ENCODE measurements at regions of chr13 and their contacts with region 1.

Region 1: GRCh38 chr13:97018029-97018831 is 24.0 kb upstream of the OXGR1 start:
- DNase-seq: peak; percentile 32
- H3K4me3 ChIP-seq: no peak overlapping the region
- H3K27ac ChIP-seq: no peak overlapping the region
- H3K27me3 ChIP-seq: peaks cover 7% of the 10 kb centered on the region
- CTCF ChIP-seq: peak; percentile 93

Region 2: GRCh38 chr13:96662036-96662435 is 356.2 kb before region 1 on chr13:
- CTCF ChIA-PET with region 1: no interaction called
- POLR2A ChIA-PET with region 1: no interaction called
- DNase-seq: no peak
- H3K4me3 ChIP-seq: no peak overlapping the region
- H3K27ac ChIP-seq: no peak overlapping the region
- H3K27me3 ChIP-seq: no peaks in the 10 kb centered on the region
- CTCF ChIP-seq: no peak

Region 3: DNA sequence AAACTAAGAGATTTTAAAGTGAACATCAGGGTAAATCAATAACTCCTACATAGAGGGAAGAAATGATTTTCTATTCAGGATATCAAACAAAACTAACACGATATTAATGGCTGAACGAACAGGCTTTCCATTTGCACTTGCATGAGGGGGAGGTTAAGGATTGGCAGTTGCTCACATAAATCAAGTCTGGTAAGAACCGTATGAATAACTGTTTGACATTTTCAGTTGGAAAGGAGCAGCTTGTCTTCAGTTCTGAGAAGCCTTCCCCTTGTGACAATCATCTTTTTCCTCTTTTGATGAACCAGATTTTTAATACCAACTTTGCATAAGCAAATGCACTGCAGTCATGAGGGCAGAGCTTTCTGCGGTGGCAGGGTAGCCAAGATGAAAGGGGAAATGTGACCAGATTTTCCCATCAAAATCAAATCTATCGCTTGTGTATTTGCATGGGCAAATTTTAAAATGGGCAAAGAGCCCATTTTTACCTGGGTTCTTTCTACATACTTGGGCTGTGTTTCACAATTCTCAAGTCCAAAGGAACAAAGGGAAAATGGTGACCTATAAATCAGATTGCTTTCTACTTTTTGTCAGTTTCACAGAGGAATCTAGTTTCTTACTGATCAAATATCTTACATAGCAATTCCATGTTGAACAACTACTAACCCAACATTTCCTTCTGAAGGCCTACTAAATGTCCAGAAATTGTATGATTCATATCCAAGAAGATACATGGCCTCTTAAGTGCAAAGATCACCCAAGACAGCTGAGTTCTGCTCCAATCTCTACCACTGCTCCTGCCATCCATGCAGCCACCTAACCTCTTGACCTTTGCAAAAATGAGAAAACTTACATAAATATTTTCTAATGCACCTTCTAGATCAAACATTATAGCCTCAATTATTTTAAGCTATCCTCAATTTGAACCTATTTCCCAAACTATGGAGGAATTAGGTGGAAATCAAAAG is 273.6 kb before region 1 on chr13:
- CTCF ChIA-PET with region 1: no interaction called
- POLR2A ChIA-PET with region 1: no interaction called
- DNase-seq: no peak
- H3K4me3 ChIP-seq: no peak overlapping the region
- H3K27ac ChIP-seq: no peak overlapping the region
- H3K27me3 ChIP-seq: no peaks in the 10 kb centered on the region
- CTCF ChIP-seq: no peak

Region 4: GRCh38 chr13:97030705-97031452 is 12.6 kb after region 1 on chr13:
- CTCF ChIA-PET with region 1: interaction called, 12 read pairs
- POLR2A ChIA-PET with region 1: no interaction called
- DNase-seq: peak; percentile 4
- H3K4me3 ChIP-seq: no peak overlapping the region
- H3K27ac ChIP-seq: no peak overlapping the region
- H3K27me3 ChIP-seq: no peaks in the 10 kb centered on the region
- CTCF ChIP-seq: 0 out of 2 replicates have a peak, but pooled peaks have one; percentile 11

Region 5: DNA sequence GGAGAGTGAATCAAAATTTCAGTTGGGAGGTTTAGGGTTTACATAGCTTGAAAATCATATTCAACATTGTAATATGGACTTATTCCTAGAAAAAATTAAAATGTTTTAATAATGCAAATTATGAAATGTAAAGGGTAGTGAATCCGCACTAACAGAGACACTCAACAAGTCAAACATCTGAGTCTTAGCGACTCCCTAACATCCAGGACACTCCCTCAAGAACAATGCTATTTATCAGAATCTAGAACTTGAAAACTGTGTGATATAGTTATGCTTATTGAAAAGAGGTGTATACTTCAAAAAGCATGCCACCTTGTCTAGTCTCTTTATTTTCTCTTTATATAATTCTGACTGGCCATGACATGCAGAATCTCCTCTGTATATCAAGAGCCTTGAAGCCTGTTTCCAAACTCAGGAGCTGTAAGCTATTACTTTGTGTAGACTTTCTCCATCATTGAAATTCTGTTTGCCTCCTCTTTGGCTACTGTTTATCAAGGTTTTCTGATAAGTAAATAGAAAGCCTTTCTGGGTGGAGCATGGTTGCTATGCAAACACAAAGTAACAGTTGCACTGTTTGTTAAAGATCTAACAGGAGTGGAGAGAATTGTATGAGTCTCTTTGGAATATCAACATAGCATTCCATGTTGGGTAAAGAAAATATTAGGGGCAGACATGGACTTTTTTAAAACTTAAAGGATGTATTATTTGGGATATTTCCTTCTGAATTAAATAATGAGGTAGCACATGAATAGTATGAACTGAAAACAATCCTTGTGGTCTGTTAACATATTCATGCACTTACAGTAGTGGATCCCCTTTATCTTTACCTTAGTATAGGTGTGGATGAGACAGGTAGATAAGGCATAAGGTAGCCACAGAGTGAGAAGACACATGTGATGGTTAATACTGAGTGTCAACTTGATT is 147.5 kb after region 1 on chr13:
- CTCF ChIA-PET with region 1: no interaction called
- POLR2A ChIA-PET with region 1: no interaction called
- DNase-seq: no peak
- H3K4me3 ChIP-seq: no peak overlapping the region
- H3K27ac ChIP-seq: no peak overlapping the region
- H3K27me3 ChIP-seq: no peaks in the 10 kb centered on the region
- CTCF ChIP-seq: no peak

Region 6: DNA sequence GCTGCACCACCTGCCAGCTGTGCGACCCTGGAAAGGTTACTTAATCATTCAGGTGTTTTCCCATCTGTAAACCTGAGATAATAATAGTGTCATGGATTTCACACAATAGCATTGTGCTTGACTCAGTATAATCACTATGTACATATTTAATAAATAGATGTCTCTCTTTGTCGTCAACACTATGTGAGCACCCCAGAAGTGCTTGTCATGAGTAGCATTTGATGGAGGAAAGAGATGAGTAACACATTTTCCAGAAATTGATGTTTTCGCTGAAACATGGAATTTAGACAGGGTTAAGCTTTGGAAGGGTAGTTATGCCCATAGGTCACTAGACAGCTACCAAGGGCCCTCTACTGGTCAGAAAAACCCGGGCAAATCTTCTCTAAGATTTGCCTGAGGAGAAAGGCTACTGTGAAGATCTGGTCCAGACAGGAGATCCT is 194.4 kb after region 1 on chr13:
- CTCF ChIA-PET with region 1: interaction called, 16 read pairs
- POLR2A ChIA-PET with region 1: no interaction called
- DNase-seq: no peak
- H3K4me3 ChIP-seq: no peak overlapping the region
- H3K27ac ChIP-seq: no peak overlapping the region
- H3K27me3 ChIP-seq: no peaks in the 10 kb centered on the region
- CTCF ChIP-seq: peak; percentile 77

Region 7: DNA sequence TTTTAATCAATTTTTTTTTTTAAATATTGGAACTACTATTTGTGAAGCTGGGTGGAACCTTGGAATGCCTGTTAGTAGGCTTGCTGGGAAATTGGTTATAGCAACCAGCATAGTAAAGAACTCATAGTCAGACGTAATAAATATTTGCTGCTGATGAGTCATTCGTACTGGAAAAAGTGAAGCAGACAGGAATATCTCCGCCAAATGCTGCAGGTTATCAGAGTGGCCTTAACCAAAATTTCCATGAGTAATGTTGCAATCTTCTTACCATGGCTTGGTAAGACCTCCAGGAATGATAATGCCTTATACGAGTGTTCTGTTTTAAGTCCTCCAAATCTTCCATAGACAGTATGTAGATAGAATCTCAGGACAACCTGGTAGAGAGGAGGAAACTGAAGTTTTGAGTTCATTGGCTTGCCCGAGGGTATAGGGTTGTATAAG is 238.1 kb after region 1 on chr13:
- CTCF ChIA-PET with region 1: no interaction called
- POLR2A ChIA-PET with region 1: no interaction called
- DNase-seq: peak; percentile 74
- H3K4me3 ChIP-seq: no peak overlapping the region
- H3K27ac ChIP-seq: peak overlapping the region; percentile 34
- H3K27me3 ChIP-seq: no peaks in the 10 kb centered on the region
- CTCF ChIP-seq: no peak

Region 8: GRCh38 chr13:97359181-97360057 is 341.2 kb after region 1 on chr13:
- CTCF ChIA-PET with region 1: interaction called, 19 read pairs
- POLR2A ChIA-PET with region 1: interaction called, 3 read pairs
- DNase-seq: peak; percentile 87
- H3K4me3 ChIP-seq: no peak overlapping the region
- H3K27ac ChIP-seq: no peak overlapping the region
- H3K27me3 ChIP-seq: no peaks in the 10 kb centered on the region
- CTCF ChIP-seq: peak; percentile 93

Region 9: DNA sequence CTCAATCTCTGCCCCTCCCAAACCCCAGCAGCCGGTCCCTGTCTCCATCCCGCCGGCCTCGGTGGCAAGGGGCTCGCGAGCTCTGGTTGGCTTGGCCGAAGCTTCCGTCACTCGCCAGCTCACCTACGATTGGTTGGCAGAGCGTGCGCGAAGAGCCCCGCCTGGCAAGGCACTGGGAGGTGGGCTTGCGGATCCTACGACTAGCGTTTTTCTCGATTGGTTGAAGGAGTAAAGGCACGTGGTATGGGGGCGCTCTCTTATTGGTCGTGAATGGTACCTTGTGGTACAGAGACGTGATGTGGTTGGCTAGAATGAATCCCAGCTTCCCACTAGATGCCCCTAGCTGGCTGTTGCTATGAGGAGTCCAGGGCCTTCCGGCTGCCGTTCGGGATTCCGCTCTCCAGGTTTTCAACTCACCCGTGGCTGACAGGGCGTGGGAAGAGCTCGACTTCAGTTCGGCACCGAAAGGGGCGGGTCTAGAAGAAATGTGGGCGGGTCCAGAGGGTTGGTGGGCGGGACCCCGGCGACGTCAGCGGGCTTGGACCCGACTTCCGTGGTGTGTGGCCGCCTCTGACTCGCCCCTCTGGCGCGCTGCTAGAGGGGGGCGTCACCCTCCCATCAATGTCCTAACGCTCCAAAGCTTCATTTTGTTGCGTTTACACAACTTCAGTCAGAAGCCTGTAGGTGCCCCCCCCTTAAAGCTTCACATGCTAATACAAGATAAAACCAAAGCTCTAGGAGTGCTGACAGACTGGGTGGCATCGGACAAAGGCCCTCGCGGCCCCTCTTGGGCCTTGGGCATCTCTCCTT is 414.9 kb after region 1 on chr13:
- CTCF ChIA-PET with region 1: interaction called, 10 read pairs
- POLR2A ChIA-PET with region 1: no interaction called
- DNase-seq: peak; percentile 100
- H3K4me3 ChIP-seq: peak overlapping the region; percentile 88
- H3K27ac ChIP-seq: peak overlapping the region; percentile 100
- H3K27me3 ChIP-seq: no peaks in the 10 kb centered on the region
- CTCF ChIP-seq: no peak

Region 10: GRCh38 chr13:97798836-97799235 is 780.6 kb after region 1 on chr13:
- CTCF ChIA-PET with region 1: interaction called, 41 read pairs
- POLR2A ChIA-PET with region 1: no interaction called
- DNase-seq: no peak
- H3K4me3 ChIP-seq: no peak overlapping the region
- H3K27ac ChIP-seq: no peak overlapping the region
- H3K27me3 ChIP-seq: peaks cover 3% of the 10 kb centered on the region
- CTCF ChIP-seq: no peak